ENCODE measurements at regions of chr3 and their contacts with region 1.

Region 1: DNA sequence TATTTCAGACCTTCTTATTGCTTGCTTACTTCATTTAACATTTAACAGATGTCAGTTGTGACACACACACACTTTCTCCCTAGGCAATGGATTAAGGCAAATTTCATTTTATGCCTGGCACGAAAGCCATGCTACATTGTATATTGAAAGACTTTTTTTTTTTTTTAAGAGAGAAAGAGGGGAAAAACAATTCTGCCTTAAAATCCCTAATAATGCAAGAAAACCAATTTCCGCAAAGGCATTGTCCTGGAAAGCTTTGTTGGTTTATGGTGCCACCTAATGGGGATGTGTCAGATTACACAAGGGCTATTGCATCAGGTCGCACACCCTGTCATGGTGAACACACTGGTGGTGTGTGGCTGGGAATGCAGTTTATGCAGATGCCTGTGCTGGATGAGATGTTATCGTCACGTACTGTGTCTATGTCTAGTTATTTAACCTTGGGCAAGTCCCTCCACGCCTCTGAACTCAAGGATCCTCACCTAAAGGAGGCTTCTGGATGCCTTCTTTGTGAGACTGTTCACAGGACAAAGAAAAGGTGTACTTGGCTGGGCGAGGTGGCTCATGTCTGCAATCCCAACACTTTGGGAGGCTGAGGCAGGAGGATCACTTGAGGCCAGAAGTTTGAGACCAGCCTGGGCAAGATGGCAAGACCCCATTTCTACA is 37.3 kb upstream of the RFTN1 start:
- DNase-seq: peak; percentile 75 to 89 (median 80)
- ATAC-seq: peak; percentile 88
- H3K4me3 ChIP-seq: no peak overlapping the region
- H3K27ac ChIP-seq: peak overlapping the region; percentile 48; the same call in 1 of the 3 replicates
- H3K4me1 ChIP-seq: peaks cover 4 to 16% of the 10 kb centered on the region in 2 experiments; a peak in 4 of 5 replicates
- H3K27me3 ChIP-seq: peaks cover 2 to 8% of the 10 kb centered on the region in 2 experiments; a peak in 2 of 5 replicates
- CTCF ChIP-seq: peak; percentile 89 to 97 (median 93)
- EP300 ChIP-seq: peak; percentile 62
- POLR2A ChIP-seq: no peak
- RAD21 ChIP-seq: peak; percentile 97

Region 2: DNA sequence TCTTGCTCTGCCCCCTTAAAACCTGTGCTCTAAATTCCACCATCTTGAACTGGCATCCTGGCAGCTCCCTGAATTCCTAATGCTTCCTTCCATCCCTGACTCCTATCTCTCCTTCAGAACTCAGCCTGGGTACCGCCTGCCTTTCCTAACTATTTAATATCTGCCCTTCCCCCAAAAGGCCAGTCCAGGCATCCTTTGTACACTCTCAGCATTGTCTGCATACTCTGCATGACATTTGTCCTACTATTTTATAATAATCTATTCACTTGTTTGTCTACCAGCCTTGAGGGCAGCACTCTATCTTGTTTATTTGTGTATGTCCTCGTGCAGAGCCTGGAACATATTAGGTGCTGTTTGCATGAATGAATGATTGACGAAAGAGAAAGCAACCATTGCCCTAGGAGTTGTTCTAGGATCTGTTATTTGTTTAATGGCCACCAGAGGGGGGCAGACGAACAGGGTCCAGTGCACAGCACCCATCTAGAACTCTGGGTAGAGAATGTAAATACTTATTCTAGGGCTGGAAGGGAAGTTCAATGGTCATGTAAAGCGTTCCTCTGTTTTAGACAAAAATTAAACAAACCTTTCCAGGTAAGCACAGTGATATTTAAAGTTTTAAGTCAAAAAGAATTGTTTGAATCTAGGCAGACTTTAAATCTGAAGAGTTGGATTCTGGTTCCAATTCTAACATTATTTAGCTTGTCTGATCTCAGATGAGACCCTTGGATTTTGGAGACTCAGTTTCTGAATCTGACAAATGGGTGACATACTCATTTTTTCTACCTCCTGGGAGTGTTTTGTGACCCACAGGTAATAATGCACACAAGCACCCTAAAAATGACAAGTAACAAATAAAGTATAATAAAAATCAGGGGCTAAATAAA is 502.1 kb before region 1 on chr3:
- CTCF ChIA-PET with region 1: interaction called, 4 read pairs
- POLR2A ChIA-PET with region 1: no interaction called
- in situ Hi-C with region 1: loop called (anchors 10 kb)
- intact Hi-C with region 1: loop called (anchors 1 kb)
- DNase-seq: peak; percentile 70 to 75 (median 74)
- ATAC-seq: peak; percentile 99
- H3K4me3 ChIP-seq: no peak overlapping the region
- H3K27ac ChIP-seq: no peak overlapping the region
- H3K4me1 ChIP-seq: no peaks in the 10 kb centered on the region
- H3K27me3 ChIP-seq: peaks cover 0 to 11% of the 10 kb centered on the region in 2 experiments; a peak in 2 of 5 replicates
- CTCF ChIP-seq: peak; percentile 82 to 89 (median 84)
- EP300 ChIP-seq: no peak
- POLR2A ChIP-seq: no peak
- RAD21 ChIP-seq: peak; percentile 94 to 95

Region 3: GRCh38 chr3:16247276-16248061 is 303.3 kb before region 1 on chr3:
- CTCF ChIA-PET with region 1: interaction called, 3 read pairs
- POLR2A ChIA-PET with region 1: no interaction called
- in situ Hi-C with region 1: no loop called
- intact Hi-C with region 1: loop called (anchors 1 kb)
- DNase-seq: peak; percentile 74 to 90 (median 79)
- ATAC-seq: peak; percentile 95
- H3K4me3 ChIP-seq: no peak overlapping the region
- H3K27ac ChIP-seq: no peak overlapping the region
- H3K4me1 ChIP-seq: peaks cover 3 to 4% of the 10 kb centered on the region in 2 experiments; a peak in 2 of 5 replicates
- H3K27me3 ChIP-seq: peaks cover 21 to 39% of the 10 kb centered on the region in 2 experiments
- CTCF ChIP-seq: peak; percentile 92 to 99 (median 96)
- EP300 ChIP-seq: no peak
- POLR2A ChIP-seq: no peak
- RAD21 ChIP-seq: peak; percentile 94 to 95

Region 4: GRCh38 chr3:16290007-16290826 is 260.6 kb before region 1 on chr3:
- CTCF ChIA-PET with region 1: interaction called, 20 read pairs
- POLR2A ChIA-PET with region 1: interaction called, 3 read pairs
- in situ Hi-C with region 1: loop called (anchors 5 kb)
- intact Hi-C with region 1: loop called (anchors 1 kb)
- DNase-seq: peak; percentile 48 to 64 (median 55)
- ATAC-seq: peak; percentile 83
- H3K4me3 ChIP-seq: no peak overlapping the region
- H3K27ac ChIP-seq: no peak overlapping the region
- H3K4me1 ChIP-seq: peaks cover 2 to 41% of the 10 kb centered on the region in 2 experiments; a peak in 4 of 5 replicates
- H3K27me3 ChIP-seq: no peaks in the 10 kb centered on the region
- CTCF ChIP-seq: peak; percentile 68 to 92 (median 77)
- EP300 ChIP-seq: no peak
- POLR2A ChIP-seq: no peak
- RAD21 ChIP-seq: peak; percentile 96 to 97

Region 5: GRCh38 chr3:16319307-16319706 is 231.5 kb before region 1 on chr3:
- CTCF ChIA-PET with region 1: no interaction called
- POLR2A ChIA-PET with region 1: no interaction called
- in situ Hi-C with region 1: no loop called
- intact Hi-C with region 1: loop called (anchors 1 kb)
- DNase-seq: peak; percentile 84 to 87 (median 84)
- ATAC-seq: peak; percentile 97
- H3K4me3 ChIP-seq: no peak overlapping the region
- H3K27ac ChIP-seq: peak overlapping the region; percentile 57; the same call in 2 of the 3 replicates
- H3K4me1 ChIP-seq: peaks cover 0 to 12% of the 10 kb centered on the region in 2 experiments; a peak in 2 of 5 replicates
- H3K27me3 ChIP-seq: no peaks in the 10 kb centered on the region
- CTCF ChIP-seq: peak; percentile 75 to 85 (median 77)
- EP300 ChIP-seq: no peak
- POLR2A ChIP-seq: no peak
- RAD21 ChIP-seq: peak; percentile 83 to 90

Region 6: GRCh38 chr3:16665282-16665741 is 114.5 kb after region 1 on chr3:
- CTCF ChIA-PET with region 1: no interaction called
- POLR2A ChIA-PET with region 1: no interaction called
- in situ Hi-C with region 1: no loop called
- intact Hi-C with region 1: no loop called
- DNase-seq: peak in 1 of 4 experiments; percentile 16
- ATAC-seq: peak; percentile 46
- H3K4me3 ChIP-seq: no peak overlapping the region
- H3K27ac ChIP-seq: no peak overlapping the region
- H3K4me1 ChIP-seq: no peaks in the 10 kb centered on the region
- H3K27me3 ChIP-seq: peaks cover 0 to 3% of the 10 kb centered on the region in 2 experiments; a peak in 1 of 5 replicates
- CTCF ChIP-seq: no peak
- EP300 ChIP-seq: no peak
- POLR2A ChIP-seq: no peak
- RAD21 ChIP-seq: no peak